Activated CD8-positive, alpha-beta T cell treated with anti-CD3 and anti-CD28 coated beads, Interleukin-2, amount 10 ng/mL, durations not matched to agents 7 days and 5 days (primary cell): ENCODE measurements at regions of chr2 and their contacts with region 1.

Region 1: DNA sequence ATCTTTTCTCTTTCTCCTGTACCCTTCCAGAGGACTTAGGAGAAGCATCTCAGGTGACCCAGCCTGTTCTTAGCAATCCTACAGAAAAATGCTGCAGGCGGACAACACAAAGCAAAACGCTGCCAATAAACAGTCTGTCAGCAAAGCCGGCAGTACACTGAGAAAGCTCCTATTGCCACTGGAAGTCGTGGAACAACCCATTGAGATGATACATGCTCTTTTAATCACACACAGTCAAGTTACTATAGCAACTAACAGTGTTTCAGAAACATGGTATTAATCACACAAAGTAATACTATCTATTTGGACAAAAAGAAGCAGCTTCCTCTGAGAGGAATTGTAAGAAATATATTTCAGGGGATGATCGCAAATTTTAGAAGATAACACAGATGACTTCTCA is 10.5 kb downstream of the CTLA4 start:
- DNase-seq: no peak
- ATAC-seq: no peak
- H3K4me3 Mint-ChIP-seq: no peak overlapping the region
- H3K27ac Mint-ChIP-seq: no peak overlapping the region
- H3K4me1 Mint-ChIP-seq: peaks cover 40% of the 10 kb centered on the region
- H3K27me3 Mint-ChIP-seq: no peaks in the 10 kb centered on the region

Region 2: DNA sequence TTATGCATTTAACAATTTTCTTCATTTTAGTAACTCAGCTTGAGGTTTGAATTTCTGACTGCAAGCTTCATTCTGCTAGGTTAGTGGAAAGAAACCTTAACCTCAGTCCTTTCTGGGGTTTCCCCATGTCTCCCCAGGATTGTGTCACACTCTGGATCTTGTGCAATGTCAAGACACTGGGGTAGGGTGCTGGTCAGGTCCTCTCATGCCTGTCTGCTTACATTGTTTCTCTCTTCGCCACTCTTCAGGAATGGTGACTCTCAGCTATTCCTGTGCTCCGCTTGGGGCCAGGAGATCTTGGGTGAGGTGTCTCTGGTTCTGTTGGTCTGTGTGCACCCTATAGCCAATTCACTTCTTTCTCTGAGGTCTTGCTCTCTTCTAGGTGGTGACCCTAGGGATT is 13.4 kb after region 1 on chr2:
- CTCF ChIA-PET with region 1: interaction called, 7 read pairs
- POLR2A ChIA-PET with region 1: interaction called, 14 read pairs
- DNase-seq: peak; percentile 40
- ATAC-seq: peak; percentile 78
- H3K4me3 Mint-ChIP-seq: no peak overlapping the region
- H3K27ac Mint-ChIP-seq: no peak overlapping the region
- H3K4me1 Mint-ChIP-seq: peaks cover 42% of the 10 kb centered on the region
- H3K27me3 Mint-ChIP-seq: no peaks in the 10 kb centered on the region

Region 3: GRCh38 chr2:203997980-203998809 is 120.1 kb after region 1 on chr2:
- CTCF ChIA-PET with region 1: no interaction called
- POLR2A ChIA-PET with region 1: no interaction called
- DNase-seq: no peak
- ATAC-seq: no peak
- H3K4me3 Mint-ChIP-seq: peak overlapping the region; percentile 8
- H3K27ac Mint-ChIP-seq: no peak overlapping the region
- H3K4me1 Mint-ChIP-seq: peaks cover 53% of the 10 kb centered on the region
- H3K27me3 Mint-ChIP-seq: no peaks in the 10 kb centered on the region